Caco-2 (cell line): ENCODE measurements at regions of chr13 and their contacts with region 1.

Region 1: DNA sequence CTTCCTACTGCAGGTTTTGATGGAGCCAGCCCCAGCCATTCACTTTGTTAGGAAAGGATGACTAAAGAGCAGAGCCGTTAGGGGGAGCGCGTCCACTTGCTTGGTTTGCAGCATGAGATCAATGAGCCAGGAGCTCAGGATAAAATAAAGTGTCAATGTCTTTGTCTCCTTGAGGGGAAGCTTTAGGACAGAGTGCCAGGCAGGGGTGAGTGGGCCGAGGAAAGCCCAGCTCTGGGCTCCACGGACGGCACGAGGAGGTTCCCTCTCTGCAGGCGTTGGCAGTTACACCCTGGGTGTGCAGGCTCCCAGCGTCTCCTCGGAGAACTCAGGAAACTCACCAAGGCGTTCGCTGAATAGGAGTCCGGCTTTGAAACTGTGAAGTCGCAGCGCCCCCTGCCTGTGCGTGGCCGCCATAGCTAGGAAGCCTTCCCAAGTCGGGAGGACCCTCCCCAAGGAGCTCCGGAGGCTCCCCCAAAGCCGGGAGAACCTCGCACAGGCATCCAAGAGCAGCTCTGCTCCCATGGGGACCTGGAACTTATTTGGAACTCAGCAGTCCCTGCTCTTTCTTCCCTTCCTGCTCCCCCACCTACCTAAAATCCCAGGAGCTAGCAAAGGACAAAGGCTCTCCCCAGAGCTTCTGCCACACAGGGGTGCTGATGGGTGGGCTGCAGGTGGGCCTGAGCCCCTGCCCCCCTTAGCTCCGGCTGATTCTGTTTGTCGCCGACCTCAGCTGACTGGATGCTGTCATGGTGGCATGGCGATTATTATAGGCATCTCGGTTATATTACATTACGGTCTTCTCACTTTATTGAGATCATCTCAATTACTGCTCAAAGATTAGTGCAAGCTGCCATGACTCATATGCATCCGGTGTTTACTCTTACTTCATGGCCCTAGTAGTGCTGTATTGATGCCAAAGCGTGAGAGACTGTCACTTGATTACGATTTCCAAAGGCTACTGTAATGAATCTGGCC is 34.4 kb downstream of the GSX1 start:
- DNase-seq: peak; percentile 89 to 91
- H3K4me3 ChIP-seq: peak overlapping the region; percentile 27
- H3K4me3 Mint-ChIP-seq: peak overlapping the region; percentile 70
- H3K27ac Mint-ChIP-seq: no peak overlapping the region
- H3K4me1 ChIP-seq: 0 out of 2 replicates have a peak, but pooled peaks cover 6% of the 10 kb centered on the region
- H3K4me1 Mint-ChIP-seq: peaks cover 7% of the 10 kb centered on the region
- H3K27me3 ChIP-seq: peaks cover under 1% of the 10 kb centered on the region; the same call in 1 of the 2 replicates
- H3K27me3 Mint-ChIP-seq: peaks cover 22% of the 10 kb centered on the region
- CTCF ChIP-seq: peak; percentile 94

Region 2: GRCh38 chr13:27362064-27362883 is 464.4 kb before region 1 on chr13:
- CTCF ChIA-PET with region 1: interaction called, 98 read pairs
- POLR2A ChIA-PET with region 1: no interaction called
- intact Hi-C with region 1: loop called (anchors 1 kb)
- DNase-seq: peak; percentile 87 to 93
- H3K4me3 ChIP-seq: peak overlapping the region; percentile 44
- H3K4me3 Mint-ChIP-seq: peak overlapping the region; percentile 71
- H3K27ac Mint-ChIP-seq: peak overlapping the region; percentile 28
- H3K4me1 ChIP-seq: peaks cover 4% of the 10 kb centered on the region; the same call in 1 of the 2 replicates
- H3K4me1 Mint-ChIP-seq: peaks cover 18% of the 10 kb centered on the region
- H3K27me3 ChIP-seq: no peaks in the 10 kb centered on the region; the same call in 1 of the 2 replicates
- H3K27me3 Mint-ChIP-seq: no peaks in the 10 kb centered on the region
- CTCF ChIP-seq: peak; percentile 94 to 98

Region 3: DNA sequence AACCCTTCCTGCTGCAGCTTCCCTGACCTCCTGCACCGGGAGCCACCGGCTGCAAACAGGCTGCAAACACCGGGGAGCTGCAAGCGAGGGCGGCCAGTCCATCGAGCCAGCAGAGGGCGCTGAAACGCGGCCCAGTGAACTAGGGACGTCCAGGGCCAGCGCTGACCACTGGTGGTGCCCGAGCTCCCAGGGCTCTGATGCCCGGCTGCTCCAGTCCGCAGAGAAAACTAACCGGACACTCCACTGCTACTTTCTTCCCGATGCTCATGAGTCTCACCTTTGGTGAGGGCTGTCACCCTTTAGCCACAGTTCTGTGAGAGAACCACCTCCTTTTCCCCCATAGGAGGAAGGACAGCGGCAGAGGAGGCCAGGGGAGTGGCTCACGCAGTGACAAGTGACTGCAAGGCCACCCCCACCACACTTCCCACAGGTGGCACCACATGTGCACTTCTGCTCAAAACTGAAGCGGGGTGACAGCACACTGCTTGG is 293.5 kb before region 1 on chr13:
- CTCF ChIA-PET with region 1: interaction called, 36 read pairs
- POLR2A ChIA-PET with region 1: no interaction called
- intact Hi-C with region 1: loop called (anchors 2 kb)
- DNase-seq: peak; percentile 72 to 87
- H3K4me3 ChIP-seq: no peak overlapping the region
- H3K4me3 Mint-ChIP-seq: no peak overlapping the region
- H3K27ac Mint-ChIP-seq: no peak overlapping the region
- H3K4me1 ChIP-seq: peaks cover 9% of the 10 kb centered on the region
- H3K4me1 Mint-ChIP-seq: peaks cover 11% of the 10 kb centered on the region
- H3K27me3 ChIP-seq: no peaks in the 10 kb centered on the region
- H3K27me3 Mint-ChIP-seq: no peaks in the 10 kb centered on the region
- CTCF ChIP-seq: peak; percentile 89 to 98

Region 4: DNA sequence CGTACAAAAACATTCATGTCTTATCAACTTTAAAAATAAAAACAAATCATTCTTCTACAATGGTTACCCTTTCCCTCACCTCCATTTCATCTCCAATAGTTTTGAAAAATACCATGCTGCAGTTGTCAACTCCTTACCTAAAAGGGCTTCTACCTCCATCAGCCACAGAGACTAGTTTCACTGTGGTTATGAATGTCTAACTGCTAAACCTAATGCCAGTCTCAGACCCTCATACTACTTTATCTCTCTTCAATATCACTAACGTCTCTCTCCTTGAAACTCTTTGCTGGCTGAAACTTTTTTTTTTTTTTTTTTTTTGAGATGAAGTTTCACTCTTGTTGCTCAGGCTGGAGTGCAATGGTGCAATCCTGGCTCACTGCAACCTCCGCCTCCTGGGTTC is 233.4 kb before region 1 on chr13:
- CTCF ChIA-PET with region 1: no interaction called
- POLR2A ChIA-PET with region 1: no interaction called
- intact Hi-C with region 1: no loop called
- DNase-seq: no peak
- H3K4me3 ChIP-seq: no peak overlapping the region
- H3K4me3 Mint-ChIP-seq: no peak overlapping the region
- H3K27ac Mint-ChIP-seq: no peak overlapping the region
- H3K4me1 ChIP-seq: peaks cover 32% of the 10 kb centered on the region
- H3K4me1 Mint-ChIP-seq: no peaks in the 10 kb centered on the region
- H3K27me3 ChIP-seq: no peaks in the 10 kb centered on the region
- H3K27me3 Mint-ChIP-seq: no peaks in the 10 kb centered on the region
- CTCF ChIP-seq: no peak

Region 5: GRCh38 chr13:27673911-27674310 is 152.8 kb before region 1 on chr13:
- CTCF ChIA-PET with region 1: no interaction called
- POLR2A ChIA-PET with region 1: no interaction called
- intact Hi-C with region 1: no loop called
- DNase-seq: no peak
- H3K4me3 ChIP-seq: no peak overlapping the region
- H3K4me3 Mint-ChIP-seq: no peak overlapping the region
- H3K27ac Mint-ChIP-seq: no peak overlapping the region
- H3K4me1 ChIP-seq: no peaks in the 10 kb centered on the region
- H3K4me1 Mint-ChIP-seq: no peaks in the 10 kb centered on the region
- H3K27me3 ChIP-seq: no peaks in the 10 kb centered on the region
- H3K27me3 Mint-ChIP-seq: no peaks in the 10 kb centered on the region
- CTCF ChIP-seq: no peak

Region 6: DNA sequence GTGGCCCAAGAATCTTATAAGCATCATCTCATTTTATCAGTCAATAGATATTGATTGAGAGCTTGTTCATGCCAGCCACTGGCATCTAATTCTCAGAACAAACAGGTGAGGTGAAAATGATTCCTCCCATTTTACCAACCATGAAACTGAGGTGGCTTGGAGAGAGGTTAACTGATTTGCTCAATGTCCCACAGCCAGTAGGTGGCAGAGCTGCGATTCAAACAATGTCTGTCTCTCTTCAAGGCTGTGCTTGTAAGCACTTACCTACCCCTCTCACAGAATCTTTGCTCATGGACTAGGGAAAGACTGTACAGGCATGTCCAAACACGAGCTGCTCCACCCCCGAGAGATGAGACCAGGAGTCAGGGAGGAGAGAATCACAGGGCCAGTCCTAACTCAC is 55.9 kb before region 1 on chr13:
- CTCF ChIA-PET with region 1: interaction called, 74 read pairs
- POLR2A ChIA-PET with region 1: no interaction called
- intact Hi-C with region 1: loop called (anchors 1 kb)
- DNase-seq: peak; percentile 60 to 70
- H3K4me3 ChIP-seq: no peak overlapping the region
- H3K4me3 Mint-ChIP-seq: no peak overlapping the region
- H3K27ac Mint-ChIP-seq: no peak overlapping the region
- H3K4me1 ChIP-seq: no peaks in the 10 kb centered on the region
- H3K4me1 Mint-ChIP-seq: peaks cover 7% of the 10 kb centered on the region
- H3K27me3 ChIP-seq: no peaks in the 10 kb centered on the region
- H3K27me3 Mint-ChIP-seq: peaks cover 2% of the 10 kb centered on the region
- CTCF ChIP-seq: peak; percentile 69 to 85

Region 7: DNA sequence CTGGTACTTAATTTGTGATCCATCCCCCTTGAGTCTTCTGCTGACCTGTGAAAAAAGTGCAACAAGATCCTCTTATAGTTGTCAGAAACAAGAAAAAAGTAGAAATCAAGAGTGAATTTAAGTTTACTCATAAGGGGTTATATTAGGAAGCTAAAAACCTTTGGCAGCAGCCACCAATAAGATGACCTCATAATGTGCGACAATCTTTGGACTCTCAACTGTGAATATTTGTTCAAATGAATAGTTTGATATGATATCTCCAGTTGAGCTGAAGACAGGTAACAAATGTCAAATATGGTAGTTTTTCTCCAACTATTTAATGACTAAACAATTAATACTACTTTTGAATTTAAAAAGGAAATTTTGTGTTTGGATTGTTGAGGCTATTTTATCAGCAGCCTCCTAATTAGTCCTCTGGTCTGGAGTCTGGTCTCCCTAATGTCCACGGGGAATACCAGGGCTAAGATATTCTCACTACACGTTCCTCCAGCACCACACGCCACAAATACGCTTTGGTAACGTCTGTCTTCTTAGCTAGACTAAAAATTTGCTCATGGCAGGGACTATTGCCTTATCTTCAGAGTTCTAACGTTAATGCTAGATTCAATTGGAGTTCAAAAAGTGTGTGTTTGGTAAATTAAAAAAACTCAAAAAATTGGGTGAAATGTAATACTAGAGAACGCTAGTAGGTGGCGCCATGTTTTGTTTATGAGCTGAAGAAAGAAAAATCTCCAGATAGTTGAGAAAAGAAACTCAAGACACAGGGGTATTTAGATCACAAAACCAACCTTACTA is 42.2 kb after region 1 on chr13:
- CTCF ChIA-PET with region 1: interaction called, 15 read pairs
- POLR2A ChIA-PET with region 1: no interaction called
- intact Hi-C with region 1: loop called (anchors 1 kb)
- DNase-seq: no peak
- H3K4me3 ChIP-seq: peak overlapping the region; percentile 15; the same call in 1 of the 2 replicates
- H3K4me3 Mint-ChIP-seq: peak overlapping the region; percentile 57
- H3K27ac Mint-ChIP-seq: peak overlapping the region; percentile 86
- H3K4me1 ChIP-seq: peaks cover 35% of the 10 kb centered on the region
- H3K4me1 Mint-ChIP-seq: peaks cover 24% of the 10 kb centered on the region
- H3K27me3 ChIP-seq: no peaks in the 10 kb centered on the region
- H3K27me3 Mint-ChIP-seq: no peaks in the 10 kb centered on the region
- CTCF ChIP-seq: peak; percentile 53 to 62

Region 8: DNA sequence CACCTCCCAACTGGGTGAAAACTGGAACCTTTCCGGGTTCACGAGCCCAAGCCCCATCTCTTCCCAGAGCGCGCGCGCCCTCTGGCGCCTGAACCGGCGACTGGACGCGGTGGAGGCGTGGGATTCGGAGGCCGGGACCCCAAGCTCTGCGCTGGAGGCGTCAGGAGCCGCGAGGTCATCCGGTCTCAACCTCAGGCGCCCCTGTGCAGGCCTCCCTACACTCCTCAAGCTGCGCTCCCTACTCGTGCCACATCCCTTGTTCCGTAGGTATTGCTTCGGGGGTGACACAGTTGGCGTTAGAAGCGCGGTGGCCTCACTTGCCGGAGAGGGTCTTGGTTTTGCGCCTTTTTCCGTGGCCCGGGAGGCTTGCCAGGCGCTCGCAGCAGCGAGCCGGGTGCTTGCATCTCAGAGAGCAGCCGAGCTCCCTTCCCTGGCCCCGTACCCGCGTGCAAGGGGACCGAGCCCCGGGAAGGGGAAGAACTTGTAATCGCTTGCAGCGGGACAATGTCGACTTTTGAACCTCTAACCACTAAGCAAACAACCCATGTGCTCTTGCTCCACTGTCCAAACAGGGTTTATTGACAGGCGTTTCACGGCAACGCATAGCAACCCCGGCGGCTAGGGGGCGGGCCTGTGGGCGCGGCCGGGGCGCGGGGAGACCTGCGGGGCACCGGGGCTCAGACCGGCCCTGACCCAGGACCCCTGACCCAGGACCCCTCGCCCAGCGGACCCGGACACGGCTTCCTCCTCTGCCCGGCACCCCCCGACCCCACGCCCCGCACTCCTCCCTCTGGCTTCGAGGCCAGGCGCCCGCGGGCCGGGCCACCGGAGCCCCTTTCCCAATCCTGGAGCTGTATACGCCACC is 133.9 kb after region 1 on chr13:
- CTCF ChIA-PET with region 1: interaction called, 12 read pairs
- POLR2A ChIA-PET with region 1: no interaction called
- intact Hi-C with region 1: no loop called
- DNase-seq: peak; percentile 96
- H3K4me3 ChIP-seq: peak overlapping the region; percentile 35
- H3K4me3 Mint-ChIP-seq: peak overlapping the region; percentile 52
- H3K27ac Mint-ChIP-seq: peak overlapping the region; percentile 66
- H3K4me1 ChIP-seq: peaks cover 88% of the 10 kb centered on the region
- H3K4me1 Mint-ChIP-seq: peaks cover 32% of the 10 kb centered on the region
- H3K27me3 ChIP-seq: no peaks in the 10 kb centered on the region
- H3K27me3 Mint-ChIP-seq: no peaks in the 10 kb centered on the region
- CTCF ChIP-seq: peak; percentile 73 to 78

Region 9: GRCh38 chr13:27997904-27998522 is 171.3 kb after region 1 on chr13:
- CTCF ChIA-PET with region 1: interaction called, 10 read pairs
- POLR2A ChIA-PET with region 1: no interaction called
- intact Hi-C with region 1: loop called (anchors 1 kb)
- DNase-seq: peak; percentile 80 to 82
- H3K4me3 ChIP-seq: no peak overlapping the region
- H3K4me3 Mint-ChIP-seq: no peak overlapping the region
- H3K27ac Mint-ChIP-seq: no peak overlapping the region
- H3K4me1 ChIP-seq: no peaks in the 10 kb centered on the region
- H3K4me1 Mint-ChIP-seq: peaks cover 7% of the 10 kb centered on the region
- H3K27me3 ChIP-seq: no peaks in the 10 kb centered on the region
- H3K27me3 Mint-ChIP-seq: no peaks in the 10 kb centered on the region
- CTCF ChIP-seq: peak; percentile 65 to 82